ENCODE measurements at regions of chr2 and their contacts with region 1.

Region 1: DNA sequence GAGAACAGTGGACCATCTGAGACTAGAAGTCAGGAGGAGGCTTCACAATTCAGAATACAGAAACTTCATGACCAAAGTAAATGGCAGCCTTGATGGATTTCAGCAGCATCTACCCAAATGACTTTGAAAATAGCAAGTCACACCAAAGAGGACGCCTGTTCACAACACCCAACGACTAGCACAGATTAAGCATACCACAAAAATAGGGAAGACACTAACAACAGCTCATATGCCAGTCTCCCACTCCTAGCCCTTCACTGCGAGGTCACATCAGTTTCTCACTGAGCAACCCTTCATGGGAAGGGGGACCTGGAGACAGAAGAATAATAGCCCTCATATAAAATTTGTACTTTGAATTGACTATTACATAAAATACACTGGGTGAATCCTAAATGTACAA is 228.4 kb upstream of the SLC39A10 start:
- DNase-seq: no peak
- H3K4me3 ChIP-seq: no peak overlapping the region
- H3K27ac ChIP-seq: no peak overlapping the region
- H3K4me1 ChIP-seq: no peaks in the 10 kb centered on the region
- H3K27me3 ChIP-seq: no peaks in the 10 kb centered on the region
- CTCF ChIP-seq: no peak
- POLR2A ChIP-seq: no peak

Region 2: GRCh38 chr2:194765723-194766122 is 663.0 kb before region 1 on chr2:
- intact Hi-C with region 1: loop called (anchors 10 kb)
- DNase-seq: no peak
- H3K4me3 ChIP-seq: no peak overlapping the region
- H3K27ac ChIP-seq: no peak overlapping the region
- H3K4me1 ChIP-seq: no peaks in the 10 kb centered on the region
- H3K27me3 ChIP-seq: no peaks in the 10 kb centered on the region
- CTCF ChIP-seq: no peak
- POLR2A ChIP-seq: no peak

Region 3: GRCh38 chr2:195352581-195352980 is 76.1 kb before region 1 on chr2:
- intact Hi-C with region 1: no loop called
- DNase-seq: no peak
- H3K4me3 ChIP-seq: no peak overlapping the region
- H3K27ac ChIP-seq: no peak overlapping the region
- H3K4me1 ChIP-seq: no peaks in the 10 kb centered on the region
- H3K27me3 ChIP-seq: no peaks in the 10 kb centered on the region
- CTCF ChIP-seq: no peak
- POLR2A ChIP-seq: no peak

Region 4: GRCh38 chr2:195450552-195451113 is 22.0 kb after region 1 on chr2:
- intact Hi-C with region 1: no loop called
- DNase-seq: no peak
- H3K4me3 ChIP-seq: no peak overlapping the region
- H3K27ac ChIP-seq: no peak overlapping the region
- H3K4me1 ChIP-seq: no peaks in the 10 kb centered on the region
- H3K27me3 ChIP-seq: no peaks in the 10 kb centered on the region
- CTCF ChIP-seq: no peak
- POLR2A ChIP-seq: no peak

Region 5: GRCh38 chr2:195520671-195521155 is 92.0 kb after region 1 on chr2:
- intact Hi-C with region 1: no loop called
- DNase-seq: no peak
- H3K4me3 ChIP-seq: no peak overlapping the region
- H3K27ac ChIP-seq: no peak overlapping the region
- H3K4me1 ChIP-seq: no peaks in the 10 kb centered on the region
- H3K27me3 ChIP-seq: no peaks in the 10 kb centered on the region
- CTCF ChIP-seq: no peak
- POLR2A ChIP-seq: no peak

Measured in breast epithelium (tissue), 4 donors.